ENCODE measurements at regions of chr2 and their contacts with region 1.

Region 1: DNA sequence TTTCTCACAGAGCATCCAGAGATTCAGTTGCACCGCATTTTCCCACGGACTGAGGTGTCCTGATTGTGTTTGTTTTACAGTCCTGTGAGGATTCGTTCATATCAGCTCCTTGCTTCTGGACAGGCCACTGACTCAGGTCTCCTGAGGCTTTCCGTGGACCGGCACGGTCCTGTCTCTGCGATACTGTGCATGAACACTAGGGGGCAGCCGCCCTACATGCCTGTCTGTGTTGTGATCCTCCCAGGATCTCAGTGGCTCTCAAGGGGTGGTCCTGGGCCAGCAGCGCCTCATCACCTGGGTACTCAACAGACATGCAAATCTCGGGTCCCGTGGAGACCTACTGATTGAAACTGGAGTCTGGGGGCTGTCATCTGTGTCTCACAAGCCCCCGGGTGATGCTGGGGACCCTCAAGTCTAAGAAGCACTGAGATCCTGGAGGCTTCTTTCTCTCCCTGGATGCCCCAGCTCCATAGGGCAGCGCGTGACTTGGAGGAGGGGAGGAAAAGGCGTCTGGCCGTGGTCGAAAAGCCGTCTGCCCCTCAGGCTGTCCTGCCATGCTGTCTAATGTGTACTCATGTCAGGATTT is 28.9 kb downstream of the IL1R2 start:
- DNase-seq: peak; percentile 91
- H3K4me3 Mint-ChIP-seq: no peak overlapping the region
- H3K27ac Mint-ChIP-seq: peak overlapping the region; percentile 66
- H3K4me1 Mint-ChIP-seq: peaks cover 71% of the 10 kb centered on the region
- H3K27me3 Mint-ChIP-seq: peaks cover 2% of the 10 kb centered on the region

Region 2: DNA sequence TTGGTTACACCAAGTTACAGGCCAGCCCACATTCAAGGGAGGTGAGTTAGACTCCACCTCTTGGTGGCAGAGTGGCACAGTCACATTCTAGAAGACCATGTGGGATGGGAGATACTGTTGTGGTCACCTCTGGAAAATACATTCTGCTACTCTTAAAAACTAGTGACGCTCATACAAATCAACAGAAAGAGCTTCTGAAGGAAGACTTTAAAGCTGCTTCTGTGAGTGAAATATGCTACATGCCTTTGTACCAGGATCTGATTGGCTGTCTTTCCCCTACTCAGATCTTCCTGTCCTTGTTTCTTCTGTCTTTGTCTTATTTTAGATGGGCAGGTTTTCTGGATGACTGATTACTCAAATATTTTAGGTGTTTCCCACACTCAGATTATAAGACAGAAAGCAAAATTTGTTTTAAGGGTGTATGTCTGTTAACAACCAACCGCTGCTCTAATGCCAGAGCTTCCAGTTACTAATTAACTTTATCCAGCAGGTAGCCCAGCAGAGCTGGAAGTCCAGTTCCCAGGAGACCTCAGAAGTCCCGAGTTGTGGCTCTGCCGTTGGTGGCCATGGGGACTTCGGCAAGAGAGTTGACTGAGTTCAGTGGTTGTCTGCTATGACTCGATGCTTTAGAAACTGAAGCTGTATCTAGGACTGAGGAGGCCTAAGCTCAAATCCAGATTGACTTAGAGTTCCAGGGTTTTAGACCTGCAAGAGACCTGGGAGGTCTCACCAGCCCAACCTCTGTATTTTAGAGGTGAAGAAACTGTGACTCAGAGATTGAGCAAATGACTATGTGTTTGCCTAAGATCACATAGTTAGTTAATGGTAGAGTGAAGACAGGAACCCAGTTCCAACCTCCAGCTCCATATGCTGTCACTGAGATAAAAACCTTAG is 21.5 kb before region 1 on chr2:
- CTCF ChIA-PET with region 1: interaction called, 28 read pairs
- POLR2A ChIA-PET with region 1: no interaction called
- intact Hi-C with region 1: loop called (anchors 1 kb)
- DNase-seq: peak; percentile 71
- H3K4me3 Mint-ChIP-seq: peak overlapping the region; percentile 66
- H3K27ac Mint-ChIP-seq: peak overlapping the region; percentile 93
- H3K4me1 Mint-ChIP-seq: peaks cover 36% of the 10 kb centered on the region
- H3K27me3 Mint-ChIP-seq: peaks cover 14% of the 10 kb centered on the region

Region 3: DNA sequence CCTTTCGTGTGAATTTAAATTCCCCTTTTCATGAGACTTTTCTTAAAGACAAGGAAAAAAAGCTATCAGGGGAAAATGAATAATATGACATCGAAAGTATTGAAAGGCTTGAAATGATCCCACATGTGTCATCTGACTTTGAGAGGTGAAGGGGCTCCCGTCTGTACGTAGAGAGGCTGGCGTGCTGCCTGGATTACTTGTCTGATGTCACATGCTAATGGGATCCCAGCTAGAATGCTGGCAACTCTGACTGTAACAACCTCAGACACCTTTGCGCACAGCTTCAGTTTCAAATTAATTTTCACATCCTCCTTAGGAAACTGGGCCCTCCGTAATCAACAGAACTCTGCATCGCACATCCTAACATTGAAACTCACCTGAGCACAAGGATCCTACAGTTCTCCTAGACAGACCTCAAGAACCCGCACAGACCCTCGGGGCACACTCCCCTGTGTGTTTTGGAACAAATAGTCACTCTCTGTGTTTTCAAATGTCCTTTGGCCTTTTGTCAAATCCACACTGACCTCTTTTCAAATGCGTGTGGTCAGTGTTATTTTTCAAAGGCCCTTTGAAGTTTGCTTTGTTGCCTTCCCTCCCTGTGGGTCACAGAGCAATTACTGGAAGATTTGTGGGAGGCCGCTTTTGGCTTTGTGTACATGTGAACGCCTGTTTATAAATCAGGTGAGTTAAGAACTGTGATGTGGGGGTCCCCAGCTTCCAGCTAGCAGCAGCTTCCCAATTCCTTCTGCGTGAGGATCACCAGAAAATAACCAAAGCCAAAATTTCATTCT is 37.0 kb after region 1 on chr2:
- CTCF ChIA-PET with region 1: interaction called, 20 read pairs
- POLR2A ChIA-PET with region 1: interaction called, 3 read pairs
- intact Hi-C with region 1: no loop called
- DNase-seq: peak; percentile 73
- H3K4me3 Mint-ChIP-seq: no peak overlapping the region
- H3K27ac Mint-ChIP-seq: peak overlapping the region; percentile 31
- H3K4me1 Mint-ChIP-seq: peaks cover 33% of the 10 kb centered on the region
- H3K27me3 Mint-ChIP-seq: no peaks in the 10 kb centered on the region

Region 4: GRCh38 chr2:102103992-102104871 is 83.5 kb after region 1 on chr2:
- CTCF ChIA-PET with region 1: interaction called, 9 read pairs
- POLR2A ChIA-PET with region 1: interaction called, 3 read pairs
- intact Hi-C with region 1: loop called (anchors 5 kb)
- DNase-seq: peak; percentile 92
- H3K4me3 Mint-ChIP-seq: peak overlapping the region; percentile 81
- H3K27ac Mint-ChIP-seq: peak overlapping the region; percentile 86
- H3K4me1 Mint-ChIP-seq: peaks cover 50% of the 10 kb centered on the region
- H3K27me3 Mint-ChIP-seq: peaks cover 12% of the 10 kb centered on the region

Region 5: GRCh38 chr2:102147935-102148334 is 127.2 kb after region 1 on chr2:
- CTCF ChIA-PET with region 1: interaction called, 19 read pairs
- POLR2A ChIA-PET with region 1: no interaction called
- intact Hi-C with region 1: no loop called
- DNase-seq: peak; percentile 82
- H3K4me3 Mint-ChIP-seq: peak overlapping the region; percentile 3
- H3K27ac Mint-ChIP-seq: peak overlapping the region; percentile 79
- H3K4me1 Mint-ChIP-seq: peaks cover 31% of the 10 kb centered on the region
- H3K27me3 Mint-ChIP-seq: peaks cover 11% of the 10 kb centered on the region

Region 6: DNA sequence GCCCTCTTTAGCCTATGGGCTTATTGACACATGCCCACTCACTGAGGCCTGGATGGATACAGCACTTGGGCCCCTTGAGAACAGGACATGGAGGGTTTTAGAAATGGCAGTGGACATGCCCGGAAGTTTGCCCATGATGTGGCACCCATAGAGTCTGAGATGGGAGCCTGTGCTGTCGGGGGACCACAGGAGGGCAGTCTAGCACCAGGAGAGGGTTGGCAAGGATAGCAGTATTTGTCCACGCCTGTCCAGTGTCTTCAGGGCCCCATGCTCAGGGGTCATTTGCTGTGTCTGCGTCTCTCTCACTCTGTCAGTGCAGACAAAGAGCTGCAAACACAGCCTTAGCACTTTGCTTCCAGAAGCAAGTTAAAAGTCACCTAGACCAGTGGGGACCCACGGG is 214.8 kb after region 1 on chr2:
- CTCF ChIA-PET with region 1: interaction called, 117 read pairs
- POLR2A ChIA-PET with region 1: interaction called, 3 read pairs
- intact Hi-C with region 1: loop called (anchors 1 kb)
- DNase-seq: peak; percentile 56
- H3K4me3 Mint-ChIP-seq: no peak overlapping the region
- H3K27ac Mint-ChIP-seq: peak overlapping the region; percentile 61
- H3K4me1 Mint-ChIP-seq: peaks cover 58% of the 10 kb centered on the region
- H3K27me3 Mint-ChIP-seq: peaks cover 2% of the 10 kb centered on the region

Region 7: GRCh38 chr2:102442967-102443828 is 422.5 kb after region 1 on chr2:
- CTCF ChIA-PET with region 1: interaction called, 19 read pairs
- POLR2A ChIA-PET with region 1: no interaction called
- intact Hi-C with region 1: loop called (anchors 5 kb)
- DNase-seq: peak; percentile 63
- H3K4me3 Mint-ChIP-seq: peak overlapping the region; percentile 16
- H3K27ac Mint-ChIP-seq: peak overlapping the region; percentile 34
- H3K4me1 Mint-ChIP-seq: peaks cover 10% of the 10 kb centered on the region
- H3K27me3 Mint-ChIP-seq: no peaks in the 10 kb centered on the region

Measured in activated CD4-positive, alpha-beta memory T cell treated with anti-CD3 and anti-CD28 coated beads for 36 hours (primary cell).